Naive thymus-derived CD4-positive, alpha-beta T cell (primary cell): ENCODE measurements at regions of chr9 and their contacts with region 1.

Region 1: GRCh38 chr9:96654443-96655197 is 497 bp downstream of the PRXL2C start:
- DNase-seq: peak; percentile 65 to 94 (median 86)
- ATAC-seq: peak; percentile 89
- H3K4me3 ChIP-seq: peak overlapping the region; percentile 62
- H3K4me3 Mint-ChIP-seq: peak overlapping the region; percentile 88 to 98 (median 93)
- H3K27ac ChIP-seq: peak overlapping the region; percentile 87
- H3K27ac Mint-ChIP-seq: peak overlapping the region; percentile 88 to 98 (median 97)
- H3K4me1 ChIP-seq: peaks cover 0 to 14% of the 10 kb centered on the region in 2 donors
- H3K4me1 Mint-ChIP-seq: peaks cover 0 to 33% (median 21%) of the 10 kb centered on the region in 7 donors
- H3K27me3 ChIP-seq: no peaks in the 10 kb centered on the region
- H3K27me3 Mint-ChIP-seq: peaks cover 0 to 23% (median 0%) of the 10 kb centered on the region in 5 donors

Region 2: DNA sequence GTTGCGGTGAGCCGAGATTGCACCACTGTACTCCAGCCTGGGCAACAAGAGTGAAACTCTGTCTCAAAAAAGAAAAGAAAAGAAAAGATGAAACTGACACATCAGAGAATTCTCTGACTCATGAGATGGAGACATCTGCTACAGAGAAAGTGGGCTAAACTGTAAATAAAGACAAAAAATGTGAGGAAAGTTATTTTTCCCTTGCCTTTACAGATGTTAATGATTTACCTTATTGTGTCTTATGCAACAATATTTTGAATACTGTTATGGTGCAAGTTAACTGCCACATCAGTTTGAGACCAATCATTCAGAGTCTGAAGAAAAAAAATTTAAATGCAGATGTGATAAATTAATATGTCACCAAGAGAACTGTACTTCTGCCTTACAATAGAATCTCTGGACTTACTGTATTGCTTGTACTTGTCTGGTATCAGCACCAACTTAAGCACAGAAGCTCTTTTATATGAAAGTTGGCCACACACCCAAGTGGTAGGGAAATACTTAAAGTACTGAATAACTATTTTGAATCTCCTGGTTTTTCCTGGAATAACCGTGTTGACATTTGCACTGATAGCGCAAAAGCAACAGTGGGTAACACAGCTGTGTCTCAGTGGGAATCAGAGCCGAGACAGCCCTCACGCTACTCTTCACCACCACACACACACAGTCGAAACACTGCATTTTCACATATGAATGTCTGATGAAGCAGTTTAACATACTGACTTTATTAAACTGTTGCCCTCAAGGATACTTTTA is 1507.0 kb before region 1 on chr9:
- CTCF ChIA-PET with region 1: no interaction called
- POLR2A ChIA-PET with region 1: no interaction called
- intact Hi-C with region 1: no loop called
- DNase-seq: no peak
- ATAC-seq: no peak
- H3K4me3 ChIP-seq: no peak overlapping the region
- H3K4me3 Mint-ChIP-seq: no peak overlapping the region
- H3K27ac ChIP-seq: no peak overlapping the region
- H3K27ac Mint-ChIP-seq: no peak overlapping the region
- H3K4me1 ChIP-seq: no peaks in the 10 kb centered on the region
- H3K4me1 Mint-ChIP-seq: peaks cover 0 to 4% (median 0%) of the 10 kb centered on the region in 7 donors
- H3K27me3 ChIP-seq: no peaks in the 10 kb centered on the region
- H3K27me3 Mint-ChIP-seq: no peaks in the 10 kb centered on the region

Region 3: GRCh38 chr9:96232539-96233241 is 421.9 kb before region 1 on chr9:
- CTCF ChIA-PET with region 1: no interaction called
- POLR2A ChIA-PET with region 1: no interaction called
- intact Hi-C with region 1: loop called (anchors 2 to 5 kb)
- DNase-seq: peak in 5 of 9 donors; percentile 13 to 42 (median 28)
- ATAC-seq: peak; percentile 69
- H3K4me3 ChIP-seq: no peak overlapping the region
- H3K4me3 Mint-ChIP-seq: no peak overlapping the region
- H3K27ac ChIP-seq: no peak overlapping the region
- H3K27ac Mint-ChIP-seq: peak overlapping the region in 1 of 9 donors; percentile 16
- H3K4me1 ChIP-seq: no peaks in the 10 kb centered on the region
- H3K4me1 Mint-ChIP-seq: peaks cover 0 to 3% (median 0%) of the 10 kb centered on the region in 7 donors
- H3K27me3 ChIP-seq: no peaks in the 10 kb centered on the region
- H3K27me3 Mint-ChIP-seq: peaks cover 15 to 51% (median 26%) of the 10 kb centered on the region in 5 donors

Region 4: DNA sequence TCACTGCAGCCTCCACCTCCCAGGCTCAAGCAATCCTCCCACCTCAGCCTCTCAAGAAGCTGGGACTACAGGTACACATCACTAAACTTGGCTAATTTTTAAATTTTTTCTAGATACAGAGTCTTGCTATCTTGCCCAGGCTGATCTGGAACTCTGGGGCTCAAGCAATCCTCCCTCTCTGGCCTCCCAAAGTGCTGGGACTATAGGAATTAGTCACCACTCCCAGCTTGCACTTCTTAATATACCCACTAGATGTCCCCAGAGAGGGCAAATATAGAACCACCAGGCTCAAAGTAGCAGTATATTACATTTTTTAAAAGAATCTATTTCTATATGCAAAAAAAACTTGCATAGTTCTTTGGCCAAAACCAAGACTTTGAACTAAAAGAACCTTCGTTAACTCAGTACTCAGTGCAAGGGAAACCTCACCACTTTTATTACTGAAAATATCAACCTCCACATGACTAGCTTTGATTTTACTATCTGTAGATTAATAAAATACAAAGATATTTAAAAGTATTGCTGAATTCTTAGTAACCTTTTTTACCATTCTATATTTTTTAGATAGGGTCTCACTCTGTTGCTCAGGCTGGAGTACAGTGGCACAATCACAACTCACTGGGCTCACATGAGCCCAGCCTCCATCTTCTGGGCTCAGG is 326.8 kb before region 1 on chr9:
- CTCF ChIA-PET with region 1: no interaction called
- POLR2A ChIA-PET with region 1: no interaction called
- intact Hi-C with region 1: loop called (anchors 1 kb)
- DNase-seq: peak in 8 of 9 donors; percentile 18 to 70 (median 54)
- ATAC-seq: peak; percentile 87
- H3K4me3 ChIP-seq: no peak overlapping the region
- H3K4me3 Mint-ChIP-seq: no peak overlapping the region
- H3K27ac ChIP-seq: no peak overlapping the region
- H3K27ac Mint-ChIP-seq: no peak overlapping the region
- H3K4me1 ChIP-seq: no peaks in the 10 kb centered on the region
- H3K4me1 Mint-ChIP-seq: no peaks in the 10 kb centered on the region
- H3K27me3 ChIP-seq: no peaks in the 10 kb centered on the region
- H3K27me3 Mint-ChIP-seq: no peaks in the 10 kb centered on the region

Region 5: DNA sequence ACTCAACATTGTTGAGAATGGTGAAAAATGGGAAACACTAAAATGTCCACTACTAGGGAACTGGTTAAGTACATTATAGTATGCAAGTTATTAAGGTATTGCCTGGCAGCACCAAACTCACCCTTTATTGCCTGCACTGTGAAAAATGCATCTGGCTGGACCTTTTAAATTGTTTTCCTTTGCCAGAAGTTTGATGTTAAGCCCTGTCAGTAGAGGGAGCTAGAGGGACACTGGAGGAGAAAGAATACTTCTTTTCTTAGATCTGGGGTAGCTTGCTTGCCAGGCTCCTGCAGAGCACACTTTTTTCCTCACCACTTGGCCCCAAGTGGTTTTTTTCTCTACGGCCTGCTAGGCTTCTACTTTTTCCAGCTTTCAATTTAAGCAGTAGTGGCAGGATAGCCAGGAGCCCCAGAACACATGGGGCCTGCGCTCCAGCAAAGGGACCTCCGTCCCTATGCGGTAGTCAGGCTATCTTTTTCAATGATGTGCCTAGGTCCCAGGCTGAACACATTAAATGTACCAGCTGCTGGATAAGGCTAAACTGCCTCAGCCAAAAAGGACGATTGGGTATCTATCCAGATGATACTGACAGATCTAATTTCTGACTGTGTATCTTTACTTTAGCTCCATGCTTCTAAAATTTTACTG is 212.7 kb before region 1 on chr9:
- CTCF ChIA-PET with region 1: no interaction called
- POLR2A ChIA-PET with region 1: no interaction called
- intact Hi-C with region 1: loop called (anchors 1 to 2 kb)
- DNase-seq: peak in 1 of 9 donors; percentile 13
- ATAC-seq: no peak
- H3K4me3 ChIP-seq: no peak overlapping the region
- H3K4me3 Mint-ChIP-seq: no peak overlapping the region
- H3K27ac ChIP-seq: no peak overlapping the region
- H3K27ac Mint-ChIP-seq: no peak overlapping the region
- H3K4me1 ChIP-seq: no peaks in the 10 kb centered on the region
- H3K4me1 Mint-ChIP-seq: no peaks in the 10 kb centered on the region
- H3K27me3 ChIP-seq: no peaks in the 10 kb centered on the region
- H3K27me3 Mint-ChIP-seq: peaks cover 0 to 14% (median 0%) of the 10 kb centered on the region in 5 donors

Region 6: DNA sequence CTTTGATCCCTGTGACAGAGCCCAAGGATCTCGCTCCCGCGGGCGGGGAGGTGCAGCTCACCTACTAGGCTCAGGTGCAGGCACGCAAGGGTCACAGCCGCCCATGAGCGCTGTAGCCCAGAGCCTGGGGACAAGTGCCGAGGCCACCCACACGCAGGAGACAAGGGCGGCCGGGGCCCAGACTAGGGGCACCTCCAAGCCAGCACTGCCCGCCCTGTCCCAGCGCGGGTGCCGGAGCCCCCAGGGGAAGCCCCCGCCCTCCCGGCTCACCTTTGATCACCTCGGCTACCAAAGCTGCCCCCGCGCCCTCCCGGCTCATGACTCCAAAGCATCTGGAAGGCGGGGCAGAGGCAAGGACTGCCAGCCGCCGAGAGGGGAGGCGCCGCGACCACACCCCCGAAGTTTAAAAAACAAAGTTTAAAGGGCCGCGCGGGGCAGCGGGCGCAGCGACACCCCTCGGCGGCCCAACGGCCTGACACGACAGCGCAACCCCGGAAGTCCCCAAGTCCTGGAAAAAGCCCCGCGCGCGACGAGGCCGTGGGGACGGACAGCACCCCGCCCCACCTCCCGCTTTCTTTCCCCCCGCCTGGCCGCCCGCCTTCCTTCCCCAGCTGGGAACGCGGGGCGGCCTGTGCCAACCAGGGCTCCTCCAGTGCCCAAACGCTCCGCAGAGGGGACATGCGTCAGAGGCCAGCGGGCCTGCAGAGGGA is 88.0 kb before region 1 on chr9:
- CTCF ChIA-PET with region 1: no interaction called
- POLR2A ChIA-PET with region 1: interaction called, 4 read pairs
- intact Hi-C with region 1: loop called (anchors 1 to 5 kb)
- DNase-seq: peak; percentile 64 to 81 (median 78)
- ATAC-seq: peak; percentile 92
- H3K4me3 ChIP-seq: peak overlapping the region; percentile 77
- H3K4me3 Mint-ChIP-seq: peak overlapping the region; percentile 83 to 95 (median 89)
- H3K27ac ChIP-seq: peak overlapping the region; percentile 89
- H3K27ac Mint-ChIP-seq: peak overlapping the region; percentile 52 to 91 (median 84)
- H3K4me1 ChIP-seq: peaks cover 8 to 16% of the 10 kb centered on the region in 2 donors
- H3K4me1 Mint-ChIP-seq: peaks cover 6 to 31% (median 29%) of the 10 kb centered on the region in 7 donors
- H3K27me3 ChIP-seq: no peaks in the 10 kb centered on the region
- H3K27me3 Mint-ChIP-seq: peaks cover 0 to 36% (median 3%) of the 10 kb centered on the region in 5 donors

Region 7: DNA sequence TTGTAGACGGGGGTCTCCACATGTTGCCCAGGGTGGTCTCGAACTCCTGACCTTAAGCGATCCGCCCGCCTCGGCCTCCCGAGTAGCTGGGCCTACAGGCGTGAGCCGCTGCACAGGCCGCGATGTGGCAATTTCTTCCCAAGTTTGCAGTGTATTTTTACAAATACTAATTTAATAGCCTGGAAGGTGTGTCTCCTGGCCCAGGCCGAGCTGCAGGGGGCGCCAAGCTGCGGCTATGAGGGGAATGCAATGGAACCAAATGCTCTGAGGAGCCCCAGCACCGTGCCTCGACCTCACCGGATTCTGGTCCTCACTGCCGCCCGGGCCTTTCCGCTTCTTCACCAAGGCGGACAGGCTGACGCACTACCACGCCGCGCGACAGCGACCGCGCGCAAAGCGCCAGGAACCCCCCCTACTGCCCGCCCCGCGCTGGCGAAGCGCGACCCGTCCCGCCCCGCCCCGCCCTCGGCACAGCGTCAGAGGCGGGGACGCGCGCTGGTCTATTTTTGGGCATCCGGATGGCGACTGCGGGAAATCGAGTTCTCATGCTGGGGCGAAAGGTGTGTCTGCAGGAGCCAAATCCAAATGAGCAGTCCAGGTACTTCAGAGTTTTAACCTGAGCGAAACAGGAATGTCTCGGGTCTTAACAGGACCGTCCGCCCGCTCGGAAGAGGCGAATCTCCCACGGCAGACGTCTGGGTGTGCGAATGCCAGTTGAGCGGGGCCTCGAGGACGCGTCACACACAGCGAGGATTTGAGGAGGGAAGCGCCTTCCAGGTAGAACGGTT is 32.1 kb after region 1 on chr9:
- CTCF ChIA-PET with region 1: interaction called, 3 read pairs
- POLR2A ChIA-PET with region 1: no interaction called
- intact Hi-C with region 1: loop called in 1 of 2 experiments (anchors 1 kb)
- DNase-seq: peak; percentile 54 to 81 (median 78)
- ATAC-seq: peak; percentile 96
- H3K4me3 ChIP-seq: peak overlapping the region; percentile 69
- H3K4me3 Mint-ChIP-seq: peak overlapping the region; percentile 73 to 95 (median 87)
- H3K27ac ChIP-seq: peak overlapping the region; percentile 67
- H3K27ac Mint-ChIP-seq: peak overlapping the region in 6 of 9 donors; percentile 42 to 81 (median 66)
- H3K4me1 ChIP-seq: no peaks in the 10 kb centered on the region
- H3K4me1 Mint-ChIP-seq: peaks cover 0 to 16% (median 7%) of the 10 kb centered on the region in 7 donors
- H3K27me3 ChIP-seq: no peaks in the 10 kb centered on the region
- H3K27me3 Mint-ChIP-seq: peaks cover 0 to 7% (median 6%) of the 10 kb centered on the region in 5 donors